Ovary (tissue), 10 donors: ENCODE measurements at regions of chr19 and their contacts with region 1.

Region 1: DNA sequence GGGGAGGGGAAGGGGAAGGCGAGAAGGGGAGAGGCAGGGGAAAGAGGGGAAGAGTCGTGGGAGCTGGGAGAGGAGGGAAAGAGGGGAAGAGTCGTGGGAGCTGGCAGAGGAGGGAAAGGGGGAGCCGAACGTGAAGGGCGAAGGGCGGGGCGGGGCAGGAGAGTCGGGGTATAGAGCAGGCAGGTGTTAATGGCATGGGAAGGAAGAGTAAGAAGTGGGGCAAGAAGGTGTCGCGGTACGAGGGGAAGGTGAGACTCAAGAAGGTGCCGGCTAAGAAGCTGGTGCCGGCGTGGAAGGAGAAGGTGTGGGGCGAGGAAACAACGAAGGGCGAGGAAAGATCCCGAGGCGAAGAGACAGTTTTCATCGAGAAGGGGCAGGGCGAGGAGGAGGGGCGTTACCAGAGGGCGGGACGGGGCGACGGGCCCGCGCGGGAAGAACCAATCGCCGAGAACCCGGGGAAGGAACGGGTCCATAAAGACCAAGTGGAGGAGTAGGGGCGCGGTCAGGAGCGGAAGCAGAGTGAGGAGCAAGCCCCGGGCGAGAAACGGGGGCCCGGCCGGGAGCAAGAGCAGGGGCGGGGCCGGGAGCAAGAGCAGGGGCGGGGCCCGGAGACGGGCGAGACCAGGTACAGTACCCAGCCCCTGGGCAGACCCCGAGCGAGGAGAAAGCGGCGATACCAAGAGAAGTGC is 463 bp downstream of the CATSPERG start:
- DNase-seq: peak; percentile 92 to 96 (median 93)
- H3K4me3 ChIP-seq: peak overlapping the region; percentile 54
- H3K27ac ChIP-seq: peak overlapping the region; percentile 82 to 86
- H3K4me1 ChIP-seq: peaks cover 2% of the 10 kb centered on the region
- H3K27me3 ChIP-seq: no peaks in the 10 kb centered on the region
- CTCF ChIP-seq: no peak
- EP300 ChIP-seq: no peak
- POLR2A ChIP-seq: peak; percentile 54

Region 2: DNA sequence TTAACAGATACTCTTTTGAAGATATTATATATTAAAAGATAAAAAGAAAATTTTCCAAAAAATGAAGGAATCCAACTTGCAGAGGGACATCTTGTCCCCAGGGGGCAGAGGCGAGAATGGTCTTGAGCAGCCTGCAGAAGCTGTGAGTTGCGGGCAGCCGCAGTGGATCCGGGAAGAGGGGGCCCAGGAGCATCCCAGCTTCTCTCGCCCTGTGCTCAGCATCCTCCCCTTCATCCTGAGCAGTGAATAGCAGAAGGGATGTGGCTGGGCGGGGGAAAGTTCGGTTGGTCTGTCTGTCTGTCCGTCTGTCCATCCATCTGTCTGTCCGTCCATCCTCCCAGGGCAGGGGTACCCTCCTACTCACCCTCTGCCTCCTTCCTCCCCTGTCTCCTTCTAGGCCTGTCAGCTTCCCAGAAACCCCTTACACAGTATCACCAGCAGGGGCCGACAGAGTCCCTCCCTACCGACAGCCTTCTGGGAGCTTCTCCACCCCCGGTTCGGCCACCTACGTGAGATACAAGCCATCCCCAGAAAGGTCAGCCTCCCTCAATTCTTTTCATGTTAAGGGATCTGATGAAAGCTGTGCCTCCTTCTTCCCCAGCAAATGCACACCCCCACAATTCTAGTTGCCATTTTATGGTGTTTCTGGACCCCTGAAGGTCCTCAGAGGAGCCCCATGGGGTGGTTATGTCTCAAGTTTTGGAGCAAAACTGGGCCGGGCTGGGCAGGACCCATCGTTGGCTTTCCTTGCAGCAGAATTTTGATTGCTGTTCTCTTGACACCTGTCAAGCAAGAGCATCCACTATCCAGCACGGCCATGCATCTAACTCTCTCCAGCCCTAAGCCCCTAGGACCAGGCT is 193.7 kb before region 1 on chr19:
- intact Hi-C with region 1: loop called in 1 of 4 experiments (anchors 10 kb)
- DNase-seq: peak; percentile 54 to 81 (median 61)
- H3K4me3 ChIP-seq: no peak overlapping the region
- H3K27ac ChIP-seq: no peak overlapping the region
- H3K4me1 ChIP-seq: no peaks in the 10 kb centered on the region
- H3K27me3 ChIP-seq: no peaks in the 10 kb centered on the region
- CTCF ChIP-seq: peak in 2 of 3 donors; percentile 35 to 43
- EP300 ChIP-seq: no peak
- POLR2A ChIP-seq: no peak

Region 3: GRCh38 chr19:38239816-38240215 is 96.3 kb before region 1 on chr19:
- intact Hi-C with region 1: loop called in 3 of 4 experiments (anchors 1 to 5 kb)
- DNase-seq: no peak
- H3K4me3 ChIP-seq: no peak overlapping the region
- H3K27ac ChIP-seq: no peak overlapping the region
- H3K4me1 ChIP-seq: peaks cover 2% of the 10 kb centered on the region
- H3K27me3 ChIP-seq: no peaks in the 10 kb centered on the region
- CTCF ChIP-seq: no peak
- EP300 ChIP-seq: no peak
- POLR2A ChIP-seq: no peak

Region 4: GRCh38 chr19:38245826-38246498 is 90.1 kb before region 1 on chr19:
- intact Hi-C with region 1: loop called in 3 of 4 experiments (anchors 1 to 5 kb)
- DNase-seq: peak; percentile 56 to 79 (median 61)
- H3K4me3 ChIP-seq: no peak overlapping the region
- H3K27ac ChIP-seq: no peak overlapping the region
- H3K4me1 ChIP-seq: peaks cover 6% of the 10 kb centered on the region
- H3K27me3 ChIP-seq: no peaks in the 10 kb centered on the region
- CTCF ChIP-seq: no peak
- EP300 ChIP-seq: no peak
- POLR2A ChIP-seq: no peak

Region 5: GRCh38 chr19:38374429-38375176 is 38.5 kb after region 1 on chr19 and contains the start of gene PSMD8:
- intact Hi-C with region 1: loop called in 1 of 4 experiments (anchors 5 kb)
- DNase-seq: peak; percentile 97 to 98 (median 98)
- H3K4me3 ChIP-seq: peak within 1 kb of the TSS; percentile 70
- H3K27ac ChIP-seq: peak within 1 kb of the TSS; percentile 0 to 59
- H3K4me1 ChIP-seq: peaks cover 15% of the 10 kb centered on the region
- H3K27me3 ChIP-seq: no peaks in the 10 kb centered on the region
- CTCF ChIP-seq: peak in 1 of 3 donors; percentile 20
- EP300 ChIP-seq: peak; percentile 67
- POLR2A ChIP-seq: peak; percentile 88
- total RNA-seq, gene PSMD8: 59.1 to 125 (median 85.3) TPM